ENCODE measurements at regions of chr10 and their contacts with region 1.

Region 1: GRCh38 chr10:5002013-5002727 is 1.5 kb downstream of the AKR1C2 start:
- DNase-seq: no peak
- ATAC-seq: no peak
- H3K4me3 ChIP-seq: peak overlapping the region in 6 of 10 donors; percentile 11 to 43 (median 32)
- H3K27ac ChIP-seq: no peak overlapping the region
- H3K4me1 ChIP-seq: no peaks in the 10 kb centered on the region
- H3K27me3 ChIP-seq: no peaks in the 10 kb centered on the region
- CTCF ChIP-seq: no peak

Region 2: DNA sequence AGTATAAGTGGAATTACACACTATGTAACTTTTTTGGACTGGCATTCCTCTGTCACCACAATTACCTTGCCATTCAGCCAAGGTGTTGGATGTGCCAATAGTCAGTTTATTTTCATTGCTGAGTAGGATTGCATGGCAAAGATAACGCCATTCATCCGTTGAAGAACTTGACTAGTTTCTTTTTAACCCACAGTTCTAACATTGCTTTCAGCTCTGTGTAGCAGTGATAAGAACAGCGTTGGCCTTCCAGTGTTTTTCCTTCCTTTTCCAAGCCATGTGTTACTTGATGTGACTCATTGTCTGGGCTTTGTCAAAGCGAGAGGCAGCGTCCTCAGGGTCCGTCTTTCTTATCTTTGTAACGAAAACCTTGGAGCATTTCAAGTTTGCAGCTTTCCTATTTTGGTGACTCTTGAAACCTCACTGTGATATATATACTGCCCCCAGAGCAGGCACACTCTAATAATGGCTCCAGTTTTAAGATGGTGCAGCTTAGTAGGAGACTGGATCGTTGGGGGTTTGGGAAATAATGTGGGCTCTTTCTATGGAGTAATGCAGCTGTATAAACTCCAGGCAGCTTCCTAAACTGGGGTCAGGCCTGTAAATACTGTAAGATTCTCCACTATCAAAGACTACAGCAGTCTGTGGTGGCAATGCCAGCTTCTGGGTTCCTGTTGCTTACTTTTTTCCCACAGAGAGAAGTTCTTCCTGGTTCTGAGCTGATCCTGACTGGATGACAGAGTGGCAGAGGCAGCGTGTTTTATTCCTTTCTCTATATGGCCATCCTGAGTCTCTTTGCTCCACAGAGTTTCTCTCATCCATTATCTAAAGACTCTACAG is 134.4 kb before region 1 on chr10:
- intact Hi-C with region 1: loop called in 1 of 10 experiments (anchors 5 kb)
- DNase-seq: no peak
- ATAC-seq: peak; percentile 85 to 93 (median 91)
- H3K4me3 ChIP-seq: no peak overlapping the region
- H3K27ac ChIP-seq: peak overlapping the region in 9 of 10 donors; percentile 5 to 62 (median 44)
- H3K4me1 ChIP-seq: peaks cover 0 to 15% (median 0%) of the 10 kb centered on the region in 9 donors
- H3K27me3 ChIP-seq: no peaks in the 10 kb centered on the region
- CTCF ChIP-seq: no peak

Region 3: DNA sequence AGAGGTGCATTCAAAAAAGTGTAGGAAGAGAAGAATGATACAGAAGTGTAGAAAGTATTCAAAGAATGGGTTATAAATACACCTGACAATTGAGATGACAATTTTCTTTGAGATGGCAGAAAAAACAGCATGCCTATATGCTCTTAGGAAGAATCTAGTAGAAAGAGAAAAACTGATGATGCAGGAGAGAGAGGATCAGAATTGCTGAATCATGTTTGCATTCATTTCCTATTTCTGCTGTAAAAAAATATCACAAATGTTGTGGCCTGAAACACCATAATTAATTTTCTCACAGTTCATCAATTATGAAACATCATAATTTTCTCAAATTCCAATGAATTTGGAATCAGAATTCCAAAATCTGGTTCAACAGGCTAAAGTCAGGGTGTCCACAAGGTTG is 48.8 kb before region 1 on chr10:
- intact Hi-C with region 1: loop called in 1 of 10 experiments (anchors 10 kb)
- DNase-seq: no peak
- ATAC-seq: no peak
- H3K4me3 ChIP-seq: no peak overlapping the region
- H3K27ac ChIP-seq: no peak overlapping the region
- H3K4me1 ChIP-seq: peaks cover 0 to 22% (median 2%) of the 10 kb centered on the region in 9 donors
- H3K27me3 ChIP-seq: no peaks in the 10 kb centered on the region
- CTCF ChIP-seq: no peak

Region 4: GRCh38 chr10:5047912-5048628 is 45.9 kb after region 1 on chr10:
- intact Hi-C with region 1: no loop called
- DNase-seq: no peak
- ATAC-seq: no peak
- H3K4me3 ChIP-seq: no peak overlapping the region
- H3K27ac ChIP-seq: no peak overlapping the region
- H3K4me1 ChIP-seq: no peaks in the 10 kb centered on the region
- H3K27me3 ChIP-seq: no peaks in the 10 kb centered on the region
- CTCF ChIP-seq: no peak